BJ (cell line): ENCODE measurements at regions of chr3 and their contacts with region 1.

Region 1: GRCh38 chr3:142976621-142977398 is 13.3 kb upstream of the PAQR9 start:
- DNase-seq: peak; percentile 67
- H3K4me3 ChIP-seq: no peak overlapping the region
- H3K27me3 ChIP-seq: peaks cover 2% of the 10 kb centered on the region; the same call in 1 of the 2 replicates
- CTCF ChIP-seq: no peak

Region 2: DNA sequence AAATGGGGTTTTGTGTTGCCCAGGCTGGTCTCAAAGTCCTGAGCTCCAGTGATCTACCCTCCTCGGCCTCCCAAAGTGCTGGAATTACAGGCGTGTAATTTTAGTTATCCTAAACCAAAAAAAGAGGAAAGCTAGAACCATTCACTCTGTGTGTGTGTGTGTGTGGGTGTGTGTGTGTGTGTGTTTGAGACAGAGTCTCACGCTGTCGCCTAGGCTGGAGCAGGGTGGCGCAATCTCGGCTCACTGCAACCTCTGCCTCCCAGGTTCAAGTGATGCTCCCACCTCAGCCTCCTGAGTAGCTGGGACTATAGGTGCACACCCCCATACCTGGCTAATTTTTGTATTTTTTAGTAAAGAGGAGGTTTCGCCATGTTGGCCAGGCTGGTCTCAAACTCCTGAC is 911.5 kb before region 1 on chr3:
- CTCF ChIA-PET with region 1: no interaction called
- POLR2A ChIA-PET with region 1: interaction called, 10 read pairs
- DNase-seq: no peak
- H3K4me3 ChIP-seq: no peak overlapping the region
- H3K27me3 ChIP-seq: no peaks in the 10 kb centered on the region
- CTCF ChIP-seq: no peak